ENCODE measurements at regions of chr7 and their contacts with region 1.

Region 1: DNA sequence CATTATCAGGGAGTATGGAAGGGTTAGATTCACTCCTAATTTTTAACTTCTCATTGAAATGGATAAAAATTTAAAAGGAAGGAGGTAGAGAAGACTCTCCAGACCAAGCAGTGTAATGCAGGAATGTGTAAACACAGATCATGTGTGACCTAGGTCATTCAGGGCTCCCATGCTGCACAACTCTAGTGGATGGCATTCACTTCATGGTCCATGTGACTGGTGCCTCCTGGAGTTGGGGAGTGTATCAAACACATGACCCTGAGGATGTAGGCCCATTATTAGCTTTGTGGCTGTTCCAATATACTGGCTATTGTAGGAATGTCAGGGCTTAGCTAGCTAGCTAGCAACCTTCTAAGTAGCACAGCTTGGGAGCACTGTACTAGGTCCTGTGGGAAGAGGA is 109.9 kb downstream of the SLC25A13 start:
- DNase-seq: no peak
- ATAC-seq: no peak
- H3K4me3 ChIP-seq: no peak overlapping the region
- H3K27ac ChIP-seq: no peak overlapping the region
- H3K4me1 ChIP-seq: peaks cover 0 to 9% (median 0%) of the 10 kb centered on the region in 12 donors
- H3K27me3 ChIP-seq: no peaks in the 10 kb centered on the region
- CTCF ChIP-seq: no peak
- POLR2A ChIP-seq: no peak

Region 2: GRCh38 chr7:96377399-96377798 is 165.4 kb after region 1 on chr7:
- intact Hi-C with region 1: loop called in 1 of 10 experiments (anchors 5 kb)
- DNase-seq: no peak
- ATAC-seq: no peak
- H3K4me3 ChIP-seq: no peak overlapping the region
- H3K27ac ChIP-seq: no peak overlapping the region
- H3K4me1 ChIP-seq: peaks cover 0 to 7% (median 0%) of the 10 kb centered on the region in 12 donors
- H3K27me3 ChIP-seq: no peaks in the 10 kb centered on the region
- CTCF ChIP-seq: no peak
- POLR2A ChIP-seq: no peak